GM12878 (cell line): ENCODE measurements at regions of chr2 and their contacts with region 1.

Region 1: GRCh38 chr2:86072271-86072858 is 33.3 kb downstream of the POLR1A start:
- DNase-seq: no peak
- ATAC-seq: peak; percentile 92
- H3K4me3 ChIP-seq: no peak overlapping the region
- H3K27ac ChIP-seq: peak overlapping the region; percentile 51
- H3K4me1 ChIP-seq: peaks cover 6% of the 10 kb centered on the region
- H3K27me3 ChIP-seq: no peaks in the 10 kb centered on the region
- CTCF ChIP-seq: no peak
- EP300 ChIP-seq: no peak
- POLR2A ChIP-seq: no peak
- RAD21 ChIP-seq: no peak

Region 2: DNA sequence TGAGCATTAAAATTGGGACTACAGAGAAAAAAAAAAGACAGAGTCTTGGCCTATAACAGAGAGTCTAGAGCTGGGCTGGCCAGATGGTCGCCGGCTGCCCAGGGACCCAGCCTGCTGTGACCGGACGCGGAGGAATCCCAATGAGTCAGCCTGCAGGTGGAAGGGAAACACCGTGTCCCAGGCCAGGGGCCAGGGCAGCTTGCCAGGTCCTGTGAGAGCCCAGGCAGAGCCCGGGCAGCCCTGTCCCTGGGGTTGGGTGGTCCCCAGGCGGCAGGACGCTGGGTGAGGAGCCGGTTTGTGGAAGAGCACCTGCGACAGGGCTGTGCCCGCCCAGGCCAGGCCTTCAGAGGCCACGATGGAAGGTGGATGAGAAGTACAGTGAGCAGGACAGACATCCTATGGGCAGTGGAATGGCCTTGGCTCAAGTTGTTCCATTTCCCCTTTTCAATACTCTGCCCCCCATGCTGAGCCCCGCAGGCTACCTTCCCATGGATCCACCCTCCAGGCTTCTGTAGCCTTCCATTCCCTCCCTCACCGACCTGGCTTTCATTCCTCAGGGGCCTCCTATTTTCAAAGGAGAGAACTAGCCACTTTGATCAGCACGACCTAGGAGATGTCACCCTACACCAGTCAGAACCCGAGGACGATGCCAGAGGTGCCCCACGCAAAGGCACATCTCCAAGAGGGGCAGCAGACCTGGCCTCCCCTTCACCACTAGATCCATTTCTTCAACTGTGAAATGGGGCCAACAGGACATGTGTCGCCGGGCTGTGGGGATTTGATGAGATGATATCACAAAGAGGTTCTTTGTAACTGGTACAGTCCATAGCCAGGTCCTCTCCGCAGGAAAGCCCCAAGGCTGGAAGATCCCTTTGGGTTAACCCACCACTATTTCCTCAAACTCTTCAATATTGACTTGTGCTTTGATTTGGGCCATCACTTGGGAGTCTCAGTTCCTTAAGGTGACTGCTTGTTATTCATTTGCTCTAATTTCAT is 54.2 kb before region 1 on chr2:
- CTCF ChIA-PET with region 1: interaction called, 10 read pairs
- POLR2A ChIA-PET with region 1: no interaction called
- RAD21 ChIA-PET with region 1: no interaction called
- SMC1A ChIA-PET with region 1: interaction called, 45 read pairs
- in situ Hi-C with region 1: no loop called
- intact Hi-C with region 1: no loop called
- DNase-seq: no peak
- ATAC-seq: peak; percentile 71
- H3K4me3 ChIP-seq: no peak overlapping the region
- H3K27ac ChIP-seq: peak overlapping the region; percentile 60
- H3K4me1 ChIP-seq: peaks cover 20% of the 10 kb centered on the region
- H3K27me3 ChIP-seq: no peaks in the 10 kb centered on the region
- CTCF ChIP-seq: no peak
- EP300 ChIP-seq: peak; percentile 22 to 68; a peak in 1 of 4 replicates
- POLR2A ChIP-seq: no peak
- RAD21 ChIP-seq: no peak